GM10248 (cell line): ENCODE measurements at regions of chr12 and their contacts with region 1.

Region 1: GRCh38 chr12:57031138-57031725 is 14.9 kb upstream of the TAC3 start:
- DNase-seq: peak; percentile 61
- CTCF ChIP-seq: no peak

Region 2: GRCh38 chr12:57011438-57012424 is 19.5 kb before region 1 on chr12:
- CTCF ChIA-PET with region 1: interaction called, 10 read pairs
- POLR2A ChIA-PET with region 1: no interaction called
- DNase-seq: peak; percentile 39
- CTCF ChIP-seq: no peak

Region 3: GRCh38 chr12:57019983-57020719 is 11.1 kb before region 1 on chr12:
- CTCF ChIA-PET with region 1: interaction called, 11 read pairs
- POLR2A ChIA-PET with region 1: interaction called, 3 read pairs
- DNase-seq: no peak
- CTCF ChIP-seq: no peak

Region 4: GRCh38 chr12:57046947-57047890 is 16.0 kb after region 1 on chr12:
- CTCF ChIA-PET with region 1: interaction called, 18 read pairs
- POLR2A ChIA-PET with region 1: no interaction called
- DNase-seq: no peak
- CTCF ChIP-seq: no peak

Region 5: GRCh38 chr12:57063991-57064685 is 32.9 kb after region 1 on chr12:
- CTCF ChIA-PET with region 1: interaction called, 14 read pairs
- POLR2A ChIA-PET with region 1: no interaction called
- DNase-seq: peak; percentile 79
- CTCF ChIP-seq: no peak

Region 6: DNA sequence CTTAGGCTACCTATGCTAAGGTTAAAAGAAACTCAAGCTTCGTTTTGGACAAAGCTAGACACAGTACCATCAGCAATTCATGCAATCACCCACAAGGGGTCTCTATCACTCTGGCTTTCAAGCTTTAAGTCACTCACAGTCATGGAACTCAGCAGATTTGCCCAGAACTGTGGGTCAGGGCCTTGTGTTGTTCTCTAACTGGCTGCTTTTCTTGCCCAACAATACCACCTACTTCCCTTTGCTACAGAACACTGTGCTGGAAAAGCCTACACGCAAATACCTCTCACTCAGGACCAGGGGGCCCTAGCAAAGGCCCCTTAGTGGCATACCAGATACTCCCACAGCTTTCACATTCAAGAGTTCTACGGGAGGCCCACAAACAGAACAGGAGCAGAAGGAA is 38.3 kb after region 1 on chr12:
- CTCF ChIA-PET with region 1: interaction called, 14 read pairs
- POLR2A ChIA-PET with region 1: no interaction called
- DNase-seq: peak; percentile 65
- CTCF ChIP-seq: peak; percentile 75